ENCODE measurements at regions of chr9 and their contacts with region 1.

Region 1: GRCh38 chr9:128286440-128286839 is 10.4 kb downstream of the SWI5 start:
- DNase-seq: no peak
- H3K4me3 ChIP-seq: no peak overlapping the region
- H3K27ac ChIP-seq: no peak overlapping the region
- H3K4me1 ChIP-seq: no peaks in the 10 kb centered on the region
- H3K27me3 ChIP-seq: no peaks in the 10 kb centered on the region
- CTCF ChIP-seq: no peak
- EP300 ChIP-seq: no peak
- POLR2A ChIP-seq: no peak

Region 2: GRCh38 chr9:127651697-127652610 is 634.5 kb before region 1 on chr9:
- in situ Hi-C with region 1: no loop called
- intact Hi-C with region 1: no loop called
- DNase-seq: no peak
- H3K4me3 ChIP-seq: no peak overlapping the region
- H3K27ac ChIP-seq: no peak overlapping the region
- H3K4me1 ChIP-seq: no peaks in the 10 kb centered on the region
- H3K27me3 ChIP-seq: no peaks in the 10 kb centered on the region
- CTCF ChIP-seq: no peak
- EP300 ChIP-seq: no peak
- POLR2A ChIP-seq: no peak

Region 3: DNA sequence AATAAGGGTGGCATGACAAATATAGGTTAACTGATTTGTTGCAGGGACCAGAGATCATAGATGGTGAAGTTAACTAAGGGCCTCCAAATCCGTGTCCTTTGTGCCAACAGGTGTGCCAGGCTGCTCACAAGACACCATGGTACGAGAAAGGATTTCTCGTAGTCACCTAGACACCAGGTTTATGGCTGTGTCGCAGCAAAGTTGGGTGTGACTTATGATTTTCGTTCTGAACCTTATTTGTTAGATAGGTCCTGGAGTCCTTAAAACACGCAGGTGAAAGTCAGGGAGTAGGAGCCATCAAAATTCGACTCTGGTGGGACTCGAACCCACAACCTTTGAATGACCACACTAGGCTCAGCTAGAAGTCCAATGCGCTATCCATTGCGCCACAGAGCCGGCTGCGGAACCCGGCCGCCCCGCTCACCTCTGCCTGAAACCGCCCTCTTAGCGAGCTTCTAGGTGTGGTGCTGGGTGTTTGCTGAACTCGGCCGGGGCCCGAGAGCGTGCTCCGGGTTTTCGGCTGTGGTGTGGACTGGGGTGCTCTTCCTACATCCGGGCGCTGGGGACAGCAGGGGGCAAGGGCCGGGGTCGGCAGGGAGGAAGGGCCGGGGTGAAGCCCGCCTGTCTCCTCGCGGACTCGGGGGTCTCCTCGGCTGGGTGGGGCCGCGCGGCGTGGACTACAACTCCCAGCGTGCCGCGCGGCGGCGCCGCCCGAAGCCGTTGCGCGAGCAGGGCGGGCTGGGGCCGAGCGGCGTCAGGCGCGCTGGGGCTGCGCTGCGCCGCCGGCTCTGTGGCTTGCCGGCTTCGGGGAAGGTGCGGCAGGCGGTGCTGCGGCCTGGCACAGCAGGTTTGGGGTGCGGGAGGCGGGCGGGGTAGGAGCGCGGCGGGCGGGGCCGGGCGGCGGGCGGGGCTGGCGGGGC is 53.6 kb after region 1 on chr9 and contains the start of gene SLC27A4:
- in situ Hi-C with region 1: no loop called
- intact Hi-C with region 1: loop called (anchors 5 kb)
- DNase-seq: peak; percentile 89
- H3K4me3 ChIP-seq: peak within 1 kb of the TSS; percentile 59 to 86 (median 80)
- H3K27ac ChIP-seq: peak within 1 kb of the TSS; percentile 85 to 93 (median 90)
- H3K4me1 ChIP-seq: peaks cover 8 to 18% (median 14%) of the 10 kb centered on the region in 4 donors
- H3K27me3 ChIP-seq: no peaks in the 10 kb centered on the region
- CTCF ChIP-seq: peak in 1 of 5 experiments; percentile 15
- EP300 ChIP-seq: no peak
- POLR2A ChIP-seq: peak; percentile 47
- total RNA-seq, gene SLC27A4: 26.3 to 92.4 (median 44.2) TPM